Activated T-helper 2 cell treated with anti-CD3 and anti-CD28 coated beads, Interferon-gamma antibody, Interleukin-2, Interleukin-4, amounts not matched to agents 10 μg/mL and 5 μg/mL and 100 μg/mL, durations not matched to agents 14 hours and 24 hours and 36 hours (primary cell): ENCODE measurements at regions of chr7 and their contacts with region 1.

Region 1: DNA sequence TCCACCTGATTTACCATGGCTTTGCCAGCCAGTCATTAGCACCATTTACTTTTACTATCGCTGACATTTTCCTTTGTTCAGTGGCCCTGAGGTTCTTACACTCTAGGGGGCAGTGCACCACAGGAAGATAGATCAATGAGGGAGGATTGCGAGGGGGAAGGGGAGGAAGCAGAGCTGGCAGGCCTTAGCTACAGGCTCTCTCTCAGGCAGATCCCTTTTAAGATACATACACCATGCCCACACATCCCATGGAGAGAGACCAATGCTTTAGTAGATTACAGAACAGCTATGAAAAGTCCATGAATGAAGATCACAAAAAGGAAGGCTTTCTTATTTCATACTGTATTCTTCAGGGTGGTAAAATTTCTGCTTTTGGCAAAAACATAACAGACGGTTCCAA is 47.4 kb downstream of the DENND11 start:
- DNase-seq: peak; percentile 40
- H3K4me3 Mint-ChIP-seq: no peak overlapping the region
- H3K27ac Mint-ChIP-seq: peak overlapping the region; percentile 51
- H3K4me1 Mint-ChIP-seq: peaks cover 6% of the 10 kb centered on the region
- H3K27me3 Mint-ChIP-seq: no peaks in the 10 kb centered on the region

Region 2: DNA sequence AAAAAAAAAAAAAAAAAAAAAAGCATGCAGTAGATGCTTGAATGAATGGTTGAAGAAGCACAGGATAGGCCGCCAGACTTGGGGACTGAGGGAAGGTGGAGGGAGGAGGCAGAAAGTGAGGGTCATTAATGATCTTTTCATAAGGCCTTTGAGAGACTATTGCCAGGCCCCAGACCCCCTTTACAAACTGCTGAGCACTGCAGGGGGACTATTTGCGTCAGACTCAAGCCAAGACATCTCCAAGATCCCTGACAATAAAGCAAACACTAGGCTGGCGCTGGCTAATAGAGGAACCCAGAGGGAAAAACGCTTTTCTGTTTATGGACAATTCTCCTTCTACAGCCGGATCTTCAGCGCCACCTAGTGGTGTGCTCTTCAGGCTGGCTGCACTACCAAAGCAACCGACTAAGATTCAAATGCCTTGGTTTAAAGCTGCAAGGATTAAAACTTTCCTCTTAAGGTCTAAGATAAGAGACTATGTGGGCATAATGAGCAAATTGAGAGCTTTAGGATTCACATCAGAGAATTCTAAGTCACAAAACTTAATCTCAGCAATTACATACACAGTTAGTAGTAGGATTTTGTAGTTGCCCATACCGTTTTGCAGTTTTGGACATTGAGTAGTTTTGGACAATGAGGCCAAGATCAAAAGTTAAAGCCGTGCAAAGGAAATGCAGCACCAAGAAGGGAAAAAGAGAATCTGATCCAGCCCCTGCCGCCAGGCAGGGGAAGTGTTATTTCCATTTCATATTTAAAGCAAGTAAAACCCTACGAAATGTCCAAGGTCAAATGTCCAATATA is 121.2 kb before region 1 on chr7:
- intact Hi-C with region 1: loop called (anchors 10 kb)
- DNase-seq: no peak
- H3K4me3 Mint-ChIP-seq: no peak overlapping the region
- H3K27ac Mint-ChIP-seq: no peak overlapping the region
- H3K4me1 Mint-ChIP-seq: peaks cover 3% of the 10 kb centered on the region
- H3K27me3 Mint-ChIP-seq: peaks cover 32% of the 10 kb centered on the region

Region 3: GRCh38 chr7:141737834-141738591 is 83.5 kb after region 1 on chr7 and contains the start of gene SSBP1:
- intact Hi-C with region 1: loop called (anchors 1 kb)
- DNase-seq: peak; percentile 93
- H3K4me3 Mint-ChIP-seq: peak within 1 kb of the TSS; percentile 94
- H3K27ac Mint-ChIP-seq: peak within 1 kb of the TSS; percentile 93
- H3K4me1 Mint-ChIP-seq: peaks cover 23% of the 10 kb centered on the region
- H3K27me3 Mint-ChIP-seq: no peaks in the 10 kb centered on the region
- total RNA-seq, gene SSBP1: 244 and 245 TPM in 2 replicates

Region 4: DNA sequence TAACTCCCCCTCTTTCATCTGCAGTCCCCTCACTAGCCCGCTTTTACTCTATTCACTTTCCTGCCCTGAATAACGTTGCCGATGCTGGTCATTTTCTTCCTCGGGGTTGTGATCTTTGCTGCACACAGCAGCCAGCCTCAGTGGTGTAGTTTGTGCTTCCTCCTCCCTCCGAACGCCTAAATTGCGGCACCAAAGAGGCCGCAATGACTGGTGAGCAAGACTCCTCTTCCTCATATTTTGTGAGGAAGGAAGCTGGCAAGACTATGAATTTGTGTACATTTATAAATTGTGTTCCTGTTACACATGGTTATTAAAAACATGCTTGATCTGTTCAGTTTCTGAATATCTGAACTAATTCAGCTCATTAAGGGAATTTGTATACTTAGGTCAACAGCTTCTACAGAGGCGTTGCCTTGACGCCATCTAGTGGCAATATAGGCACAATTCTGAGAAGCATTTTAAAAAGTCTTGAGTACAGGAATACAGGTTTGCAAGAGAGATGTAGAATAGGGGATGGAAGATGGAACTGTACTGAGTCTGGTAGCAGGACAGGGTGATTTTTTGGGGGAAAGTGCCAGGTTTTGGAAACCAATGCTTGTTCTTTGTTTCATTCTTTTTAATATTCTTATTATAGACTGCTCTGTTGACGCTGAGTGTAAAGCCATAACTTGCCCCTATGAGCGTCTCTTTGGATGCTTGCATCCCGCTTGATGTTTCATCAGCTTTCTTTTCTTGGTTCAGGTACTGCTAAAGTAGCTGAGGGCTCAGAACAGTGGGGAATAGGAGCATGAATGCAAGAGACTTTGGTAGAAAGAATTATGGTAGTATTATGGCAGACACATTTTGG is 131.4 kb after region 1 on chr7:
- intact Hi-C with region 1: loop called (anchors 5 kb)
- DNase-seq: no peak
- H3K4me3 Mint-ChIP-seq: no peak overlapping the region
- H3K27ac Mint-ChIP-seq: no peak overlapping the region
- H3K4me1 Mint-ChIP-seq: no peaks in the 10 kb centered on the region
- H3K27me3 Mint-ChIP-seq: no peaks in the 10 kb centered on the region